ENCODE measurements at regions of chr15 and their contacts with region 1.

Region 1: GRCh38 chr15:44738340-44738984 is 2.1 kb downstream of the TRIM69 start:
- DNase-seq: no peak
- ATAC-seq: peak; percentile 72
- H3K4me3 ChIP-seq: no peak overlapping the region
- H3K27ac ChIP-seq: no peak overlapping the region
- H3K4me1 ChIP-seq: peaks cover 0 to 2% of the 10 kb centered on the region in 2 donors
- H3K27me3 ChIP-seq: no peaks in the 10 kb centered on the region

Region 2: GRCh38 chr15:43194795-43195194 is 1543.7 kb before region 1 on chr15:
- intact Hi-C with region 1: no loop called
- DNase-seq: no peak
- ATAC-seq: no peak
- H3K4me3 ChIP-seq: no peak overlapping the region
- H3K27ac ChIP-seq: no peak overlapping the region
- H3K4me1 ChIP-seq: no peaks in the 10 kb centered on the region
- H3K27me3 ChIP-seq: no peaks in the 10 kb centered on the region

Region 3: DNA sequence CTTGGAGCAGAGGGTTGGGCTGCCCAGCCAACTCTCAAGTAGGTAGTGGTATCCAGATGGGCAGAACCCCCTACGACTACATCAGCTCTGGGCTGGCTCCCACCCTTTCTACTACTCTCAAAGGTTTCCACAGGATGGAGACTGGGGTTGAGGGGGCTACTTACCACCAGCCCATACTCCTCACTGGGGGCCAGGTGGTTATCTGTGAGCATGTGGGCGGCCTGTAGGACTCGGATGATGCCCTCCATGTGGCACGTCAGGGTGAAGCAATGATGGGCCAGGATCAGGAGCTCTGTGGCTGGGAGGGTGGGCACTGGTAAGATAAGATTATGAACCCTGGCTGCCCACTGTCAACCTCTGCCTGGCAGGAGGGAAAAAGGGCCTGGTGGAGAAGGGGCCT is 168.1 kb before region 1 on chr15:
- intact Hi-C with region 1: loop called in 1 of 2 experiments (anchors 10 kb)
- DNase-seq: no peak
- ATAC-seq: peak; percentile 13
- H3K4me3 ChIP-seq: no peak overlapping the region
- H3K27ac ChIP-seq: no peak overlapping the region
- H3K4me1 ChIP-seq: no peaks in the 10 kb centered on the region
- H3K27me3 ChIP-seq: no peaks in the 10 kb centered on the region

Region 4: GRCh38 chr15:44598892-44599291 is 139.6 kb before region 1 on chr15:
- intact Hi-C with region 1: loop called in 1 of 2 experiments (anchors 5 kb)
- DNase-seq: no peak
- ATAC-seq: no peak
- H3K4me3 ChIP-seq: no peak overlapping the region
- H3K27ac ChIP-seq: peak overlapping the region in 1 of 2 donors; percentile 54
- H3K4me1 ChIP-seq: peaks cover 0 to 4% of the 10 kb centered on the region in 2 donors
- H3K27me3 ChIP-seq: no peaks in the 10 kb centered on the region

Region 5: DNA sequence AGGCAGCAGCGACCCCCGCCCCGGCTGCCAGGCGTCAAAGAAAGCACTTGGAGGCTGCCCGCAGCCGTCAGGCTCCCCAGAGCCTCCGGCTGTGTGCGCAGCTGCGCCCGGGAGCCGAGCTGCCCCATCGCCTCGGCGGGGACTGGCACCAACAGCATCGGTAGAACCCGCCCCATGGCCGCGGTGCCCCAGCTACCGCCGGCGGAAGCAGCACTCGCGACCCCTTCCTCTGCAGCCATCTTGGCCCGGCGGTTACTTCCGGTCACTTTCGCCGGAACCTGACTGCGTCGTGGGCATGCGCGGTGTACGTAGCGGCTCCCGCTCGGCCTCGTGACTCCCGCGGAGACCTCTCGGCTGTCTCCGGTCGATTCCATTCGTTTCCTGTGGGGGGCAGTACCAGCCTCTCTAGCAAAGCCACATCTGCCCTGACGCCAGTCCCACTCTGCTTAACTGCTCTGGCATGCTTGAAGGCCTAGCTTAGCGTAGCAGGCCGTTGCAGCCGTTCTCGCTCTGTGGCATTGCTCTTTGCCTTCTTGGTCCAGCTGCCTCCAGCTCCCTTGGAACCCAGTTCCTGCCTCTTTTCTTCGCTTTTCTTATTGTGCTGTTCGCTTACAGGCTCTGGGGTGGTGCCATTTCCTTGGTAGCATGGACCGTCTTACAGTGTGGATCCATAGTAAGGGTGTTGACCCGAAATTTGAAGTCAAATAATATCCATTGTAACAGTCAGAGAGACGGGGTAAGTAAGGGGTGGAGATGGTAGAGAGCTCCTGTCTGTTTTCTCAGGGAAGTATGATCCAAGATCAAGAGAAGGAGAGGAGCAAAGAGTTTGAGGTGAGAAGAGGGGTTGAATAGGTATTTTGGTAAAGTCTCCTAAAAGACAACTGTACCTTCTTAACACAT is 74.8 kb before region 1 on chr15 and contains the start of gene SPG11:
- intact Hi-C with region 1: loop called (anchors 2 kb)
- DNase-seq: peak; percentile 99
- ATAC-seq: peak; percentile 99
- H3K4me3 ChIP-seq: peak within 1 kb of the TSS; percentile 68 to 91
- H3K27ac ChIP-seq: peak within 1 kb of the TSS; percentile 88
- H3K4me1 ChIP-seq: no peaks in the 10 kb centered on the region
- H3K27me3 ChIP-seq: no peaks in the 10 kb centered on the region
- total RNA-seq, gene SPG11: 61.1 to 96.3 TPM

Region 6: GRCh38 chr15:44804298-44805046 is 66.0 kb after region 1 on chr15:
- intact Hi-C with region 1: no loop called
- DNase-seq: no peak
- ATAC-seq: no peak
- H3K4me3 ChIP-seq: no peak overlapping the region
- H3K27ac ChIP-seq: no peak overlapping the region
- H3K4me1 ChIP-seq: no peaks in the 10 kb centered on the region
- H3K27me3 ChIP-seq: peaks cover 0 to 1% of the 10 kb centered on the region in 2 donors

Region 7: GRCh38 chr15:44956388-44956787 is 217.9 kb after region 1 on chr15 and contains the start of gene TERB2:
- intact Hi-C with region 1: no loop called
- DNase-seq: no peak
- ATAC-seq: no peak
- H3K4me3 ChIP-seq: no peak within 1 kb of the TSS
- H3K27ac ChIP-seq: no peak within 1 kb of the TSS
- H3K4me1 ChIP-seq: no peaks in the 10 kb centered on the region
- H3K27me3 ChIP-seq: no peaks in the 10 kb centered on the region
- total RNA-seq, gene TERB2: not detected

Measured in aorta (tissue), 5 donors.